AG04449 (cell line): ENCODE measurements at regions of chr5 and their contacts with region 1.

Region 1: GRCh38 chr5:159156426-159157238 is 52.7 kb downstream of the RNF145 start:
- DNase-seq: no peak
- H3K4me3 ChIP-seq: no peak overlapping the region
- CTCF ChIP-seq: peak; percentile 73

Region 2: GRCh38 chr5:158898185-158899177 is 258.2 kb before region 1 on chr5:
- CTCF ChIA-PET with region 1: no interaction called
- POLR2A ChIA-PET with region 1: no interaction called
- DNase-seq: no peak
- H3K4me3 ChIP-seq: no peak overlapping the region
- CTCF ChIP-seq: no peak

Region 3: GRCh38 chr5:159175547-159175946 is 18.9 kb after region 1 on chr5:
- CTCF ChIA-PET with region 1: interaction called, 72 read pairs
- POLR2A ChIA-PET with region 1: no interaction called
- DNase-seq: no peak
- H3K4me3 ChIP-seq: no peak overlapping the region
- CTCF ChIP-seq: no peak

Region 4: GRCh38 chr5:159209438-159210305 is 53.0 kb after region 1 on chr5 and contains the start of gene RNF145:
- CTCF ChIA-PET with region 1: interaction called, 19 read pairs
- POLR2A ChIA-PET with region 1: no interaction called
- DNase-seq: no peak
- H3K4me3 ChIP-seq: peak within 1 kb of the TSS; percentile 87
- CTCF ChIP-seq: no peak

Region 5: GRCh38 chr5:159274676-159275075 is 118.0 kb after region 1 on chr5:
- CTCF ChIA-PET with region 1: interaction called, 12 read pairs
- POLR2A ChIA-PET with region 1: no interaction called
- DNase-seq: no peak
- H3K4me3 ChIP-seq: no peak overlapping the region
- CTCF ChIP-seq: no peak